MCF 10A (cell line): ENCODE measurements at regions of chr13 and their contacts with region 1.

Region 1: GRCh38 chr13:33542283-33543088 is 256.9 kb upstream of the STARD13 start:
- DNase-seq: peak; percentile 98
- H3K4me3 Mint-ChIP-seq: peak overlapping the region; percentile 87
- H3K27ac Mint-ChIP-seq: peak overlapping the region; percentile 99
- H3K4me1 Mint-ChIP-seq: peaks cover 8% of the 10 kb centered on the region
- H3K27me3 Mint-ChIP-seq: no peaks in the 10 kb centered on the region
- CTCF ChIP-seq: peak; percentile 81

Region 2: GRCh38 chr13:32586080-32586900 is 956.2 kb before region 1 on chr13 and contains the start of gene PDS5B:
- CTCF ChIA-PET with region 1: interaction called, 4 read pairs
- POLR2A ChIA-PET with region 1: interaction called, 7 read pairs
- intact Hi-C with region 1: loop called (anchors 1 kb)
- DNase-seq: peak; percentile 92
- H3K4me3 Mint-ChIP-seq: peak within 1 kb of the TSS; percentile 86
- H3K27ac Mint-ChIP-seq: peak within 1 kb of the TSS; percentile 85
- H3K4me1 Mint-ChIP-seq: peaks cover 30% of the 10 kb centered on the region
- H3K27me3 Mint-ChIP-seq: no peaks in the 10 kb centered on the region
- CTCF ChIP-seq: peak; percentile 72
- total RNA-seq, gene PDS5B: 25.4 and 29.6 TPM in 2 replicates

Region 3: GRCh38 chr13:33125821-33126570 is 416.5 kb before region 1 on chr13:
- CTCF ChIA-PET with region 1: interaction called, 4 read pairs
- POLR2A ChIA-PET with region 1: interaction called, 3 read pairs
- intact Hi-C with region 1: loop called (anchors 10 kb)
- DNase-seq: peak; percentile 94
- H3K4me3 Mint-ChIP-seq: peak overlapping the region; percentile 4
- H3K27ac Mint-ChIP-seq: peak overlapping the region; percentile 79
- H3K4me1 Mint-ChIP-seq: peaks cover 26% of the 10 kb centered on the region
- H3K27me3 Mint-ChIP-seq: no peaks in the 10 kb centered on the region
- CTCF ChIP-seq: no peak

Region 4: DNA sequence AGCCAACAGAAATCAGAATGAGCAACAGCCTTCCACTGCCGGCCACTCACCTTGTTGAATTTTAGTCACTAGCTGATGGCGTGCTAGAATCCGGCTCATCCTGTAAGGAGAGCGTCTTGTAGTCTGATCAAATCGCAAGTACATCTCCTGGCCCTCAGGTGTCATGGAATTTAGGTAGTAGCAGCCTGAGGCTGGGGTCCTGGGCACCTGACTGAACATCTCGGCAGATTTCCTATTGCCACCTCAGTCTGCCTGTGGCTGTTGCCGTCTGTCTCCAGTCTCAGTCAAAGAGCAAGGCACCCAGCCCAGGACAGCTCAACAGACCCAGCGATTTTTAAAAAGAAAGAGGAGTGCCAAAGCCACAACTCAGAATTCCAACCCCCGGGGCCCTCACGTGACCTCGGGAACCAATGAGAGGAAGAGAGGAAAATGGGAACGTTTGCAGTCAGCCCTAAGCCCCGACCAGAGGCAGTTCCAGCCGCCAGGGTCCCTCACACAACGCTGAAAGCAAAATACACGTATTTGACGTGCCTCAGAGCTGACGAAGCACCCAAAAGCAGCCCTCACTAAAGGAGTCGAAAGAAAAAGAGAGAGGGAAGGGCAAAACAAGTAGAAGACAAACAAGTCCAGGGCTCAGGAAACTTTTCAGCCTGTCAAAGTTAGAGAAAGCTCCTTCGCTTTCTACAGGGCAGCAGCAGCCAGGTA is 256.9 kb before region 1 on chr13 and contains the start of gene STARD13:
- CTCF ChIA-PET with region 1: interaction called, 3 read pairs
- POLR2A ChIA-PET with region 1: interaction called, 18 read pairs
- intact Hi-C with region 1: loop called (anchors 2 kb)
- DNase-seq: peak; percentile 97
- H3K4me3 Mint-ChIP-seq: peak within 1 kb of the TSS; percentile 91
- H3K27ac Mint-ChIP-seq: peak within 1 kb of the TSS; percentile 95
- H3K4me1 Mint-ChIP-seq: peaks cover 30% of the 10 kb centered on the region
- H3K27me3 Mint-ChIP-seq: no peaks in the 10 kb centered on the region
- CTCF ChIP-seq: peak; percentile 12
- total RNA-seq, gene STARD13: 26.3 and 31.9 TPM in 2 replicates

Region 5: DNA sequence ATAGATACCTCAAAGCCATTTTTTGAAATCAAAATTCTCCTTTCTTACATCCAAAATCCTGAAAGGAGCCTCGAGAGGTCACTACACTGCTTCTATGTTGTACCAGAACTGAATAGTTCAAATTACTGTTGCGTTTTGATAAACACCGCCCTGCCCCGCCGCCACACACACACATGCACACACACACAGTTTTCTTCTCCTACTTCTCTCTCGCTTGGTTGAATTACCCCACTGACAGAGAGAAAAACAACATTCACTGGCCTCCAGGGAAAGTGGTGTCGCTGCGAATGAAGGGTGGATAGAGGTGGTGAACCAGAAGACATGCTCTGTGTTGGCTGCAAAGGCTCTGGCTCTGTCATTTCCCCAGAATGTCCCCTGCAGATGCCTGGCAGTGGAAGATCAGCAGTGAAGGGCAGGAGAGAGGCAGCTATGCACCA is 92.1 kb after region 1 on chr13:
- CTCF ChIA-PET with region 1: interaction called, 10 read pairs
- POLR2A ChIA-PET with region 1: interaction called, 20 read pairs
- intact Hi-C with region 1: no loop called
- DNase-seq: peak; percentile 17
- H3K4me3 Mint-ChIP-seq: peak overlapping the region; percentile 41
- H3K27ac Mint-ChIP-seq: peak overlapping the region; percentile 89
- H3K4me1 Mint-ChIP-seq: peaks cover 40% of the 10 kb centered on the region
- H3K27me3 Mint-ChIP-seq: no peaks in the 10 kb centered on the region
- CTCF ChIP-seq: no peak

Region 6: DNA sequence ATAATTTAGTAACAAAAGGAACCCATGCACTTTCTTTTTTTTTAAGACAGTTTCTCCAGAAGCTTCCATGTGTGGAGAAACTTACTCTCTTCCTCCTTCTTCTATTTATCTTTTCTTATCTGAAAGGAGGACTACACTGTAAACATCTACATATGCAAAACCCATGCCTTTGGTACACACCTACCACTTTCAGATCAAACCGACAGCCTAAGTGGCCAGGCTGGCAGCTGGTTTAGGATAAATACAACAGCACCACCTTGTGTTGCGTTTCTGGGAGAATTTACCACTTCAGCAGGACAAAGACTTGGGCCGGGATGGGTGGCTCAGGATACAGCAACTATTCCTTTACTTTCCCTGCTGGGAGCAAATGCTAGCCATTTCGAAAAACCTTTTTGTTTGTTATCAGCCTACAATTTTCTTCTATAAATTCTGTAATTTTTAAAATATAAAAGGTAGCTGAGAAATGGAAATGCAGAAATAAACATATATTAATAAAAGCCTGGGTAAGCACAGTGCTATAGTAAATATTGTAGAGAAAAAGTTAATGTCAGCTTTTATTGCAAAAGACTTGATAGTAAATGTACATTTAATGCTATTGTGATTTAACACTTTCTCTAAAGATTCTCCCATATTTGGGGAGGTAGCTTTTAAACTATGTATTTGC is 181.4 kb after region 1 on chr13:
- CTCF ChIA-PET with region 1: interaction called, 76 read pairs
- POLR2A ChIA-PET with region 1: interaction called, 35 read pairs
- intact Hi-C with region 1: loop called (anchors 1 kb)
- DNase-seq: peak; percentile 84
- H3K4me3 Mint-ChIP-seq: no peak overlapping the region
- H3K27ac Mint-ChIP-seq: no peak overlapping the region
- H3K4me1 Mint-ChIP-seq: peaks cover 15% of the 10 kb centered on the region
- H3K27me3 Mint-ChIP-seq: no peaks in the 10 kb centered on the region
- CTCF ChIP-seq: peak; percentile 78